Activated T-helper 1 cell treated with anti-CD3 and anti-CD28 coated beads, Interleukin-12 subunit alpha, Interleukin-12 subunit beta, Interleukin-2, Interleukin-4 antibody, amounts not matched to agents 30 ng/mL and 10 ng/mL and 1 ng/mL, durations not matched to agents 14 hours and 24 hours and 36 hours (primary cell): ENCODE measurements at regions of chr21 and their contacts with region 1.

Region 1: DNA sequence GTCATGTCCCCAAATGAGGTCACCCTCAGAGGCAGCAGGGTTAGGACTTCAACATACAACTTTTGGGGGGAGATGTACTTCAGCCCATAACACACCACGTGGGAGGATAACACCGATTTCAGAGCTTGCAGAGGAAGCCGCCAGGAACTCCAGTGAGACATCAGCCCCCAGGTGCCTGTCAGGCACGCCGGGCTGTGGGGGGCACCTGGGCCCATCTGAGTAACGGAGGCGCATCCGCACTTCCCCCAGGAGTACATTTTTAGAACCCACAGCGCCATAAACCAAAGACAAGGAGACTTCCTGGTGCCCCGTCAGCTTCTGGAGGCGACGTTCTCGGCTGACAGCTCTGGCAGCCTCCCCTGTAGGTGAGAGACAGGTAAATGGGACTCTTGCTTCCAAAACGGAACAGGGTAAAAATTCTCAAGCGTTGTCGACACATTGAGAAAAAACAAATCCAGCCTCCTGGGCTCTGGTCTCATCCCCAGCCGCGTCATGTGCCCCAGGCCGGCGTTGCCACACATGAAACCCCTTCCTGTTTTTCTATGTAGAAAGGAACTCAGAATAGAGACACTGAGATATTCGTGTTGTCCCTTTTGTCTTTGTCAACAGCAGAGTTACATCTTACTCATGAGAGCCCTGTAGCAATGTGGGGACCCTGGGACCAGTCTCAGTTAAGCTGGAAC is 93.3 kb downstream of the PDE9A start:
- DNase-seq: peak; percentile 33
- H3K4me3 Mint-ChIP-seq: peak overlapping the region; percentile 39
- H3K27ac Mint-ChIP-seq: peak overlapping the region; percentile 91
- H3K4me1 Mint-ChIP-seq: peaks cover 23% of the 10 kb centered on the region
- H3K27me3 Mint-ChIP-seq: peaks cover 2% of the 10 kb centered on the region

Region 2: GRCh38 chr21:42818328-42818749 is 71.6 kb after region 1 on chr21:
- intact Hi-C with region 1: loop called (anchors 5 kb)
- DNase-seq: peak; percentile 17
- H3K4me3 Mint-ChIP-seq: no peak overlapping the region
- H3K27ac Mint-ChIP-seq: no peak overlapping the region
- H3K4me1 Mint-ChIP-seq: no peaks in the 10 kb centered on the region
- H3K27me3 Mint-ChIP-seq: peaks cover 2% of the 10 kb centered on the region

Region 3: DNA sequence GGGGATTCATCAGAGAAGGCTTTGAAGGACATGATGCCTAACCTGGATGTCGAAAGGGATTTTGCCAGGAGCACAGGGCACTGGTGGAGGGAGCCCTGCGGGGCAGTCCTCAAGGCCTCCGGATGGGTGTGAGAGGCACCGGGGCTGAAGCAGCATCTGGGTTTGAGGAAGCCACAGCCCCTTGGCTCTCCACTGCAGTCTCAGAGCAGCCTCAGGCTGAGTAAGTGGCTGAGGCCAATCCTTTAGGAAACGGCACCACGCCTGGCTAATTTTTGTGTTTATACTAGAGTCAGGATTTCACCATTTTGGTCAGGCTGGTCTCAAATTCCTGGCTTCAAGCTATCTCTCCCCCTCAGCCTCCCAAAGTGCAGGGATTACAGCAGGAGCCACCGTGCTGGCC is 166.7 kb after region 1 on chr21:
- intact Hi-C with region 1: no loop called
- DNase-seq: no peak
- H3K4me3 Mint-ChIP-seq: no peak overlapping the region
- H3K27ac Mint-ChIP-seq: no peak overlapping the region
- H3K4me1 Mint-ChIP-seq: no peaks in the 10 kb centered on the region
- H3K27me3 Mint-ChIP-seq: no peaks in the 10 kb centered on the region

Region 4: GRCh38 chr21:42923541-42924432 is 177.1 kb after region 1 on chr21:
- intact Hi-C with region 1: no loop called
- DNase-seq: peak; percentile 74
- H3K4me3 Mint-ChIP-seq: peak overlapping the region; percentile 35
- H3K27ac Mint-ChIP-seq: peak overlapping the region; percentile 67
- H3K4me1 Mint-ChIP-seq: peaks cover 16% of the 10 kb centered on the region
- H3K27me3 Mint-ChIP-seq: no peaks in the 10 kb centered on the region